Endothelial cell of umbilical vein (primary cell): ENCODE measurements at regions of chr17 and their contacts with region 1.

Region 1: DNA sequence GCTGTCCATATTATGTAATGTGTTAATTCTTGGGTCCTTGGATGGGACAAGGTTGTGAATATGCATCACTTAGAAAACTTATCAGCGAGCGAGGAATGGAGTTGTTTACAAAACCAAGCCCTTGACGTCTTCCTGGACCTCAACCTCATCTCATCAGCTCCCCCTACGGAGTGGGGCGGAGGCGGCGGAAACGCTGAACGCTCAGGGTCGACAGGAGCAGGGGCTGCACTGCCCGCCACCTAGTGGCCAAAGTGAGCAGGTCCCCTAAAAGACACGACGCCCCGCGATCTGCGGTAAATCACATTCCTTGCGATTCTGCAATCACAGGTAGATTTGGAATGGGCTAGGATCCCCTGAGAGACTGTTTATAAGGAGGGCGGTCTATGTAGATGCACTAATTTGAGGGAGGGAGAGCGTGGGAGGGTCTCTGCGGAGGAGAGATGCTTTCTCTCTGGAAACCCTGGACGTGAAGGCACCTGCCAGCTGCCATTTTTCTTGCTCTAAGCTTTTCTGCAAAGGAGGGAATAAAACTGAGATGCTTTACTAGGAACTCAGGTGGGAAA is 5.4 kb upstream of the ICAM2 start:
- DNase-seq: peak; percentile 82
- H3K4me3 ChIP-seq: no peak overlapping the region
- H3K27ac ChIP-seq: peak overlapping the region; percentile 43
- H3K4me1 ChIP-seq: peaks cover 29% of the 10 kb centered on the region
- H3K27me3 ChIP-seq: no peaks in the 10 kb centered on the region
- CTCF ChIP-seq: peak; percentile 98
- POLR2A ChIP-seq: no peak

Region 2: DNA sequence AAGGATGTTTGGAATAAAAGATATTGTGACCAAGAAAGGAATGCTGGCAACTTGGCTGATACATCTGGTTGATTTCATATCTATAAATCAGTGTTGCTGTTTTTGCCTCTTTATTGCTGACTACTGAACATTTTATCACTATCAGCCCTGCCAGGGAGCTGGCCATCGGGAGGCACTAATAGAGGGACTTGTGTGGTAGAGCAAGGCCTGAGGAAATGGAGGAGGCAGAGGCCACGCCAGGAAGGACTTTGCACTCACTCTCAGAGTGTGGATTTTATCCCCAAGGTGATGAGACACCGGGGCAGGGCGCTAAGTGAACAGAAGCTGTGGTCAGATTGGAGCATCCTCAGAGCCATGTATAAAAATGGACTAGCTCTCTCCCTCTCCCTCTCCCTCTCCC is 570.4 kb before region 1 on chr17:
- CTCF ChIA-PET with region 1: no interaction called
- POLR2A ChIA-PET with region 1: no interaction called
- dilution Hi-C with region 1: no loop called
- intact Hi-C with region 1: no loop called
- DNase-seq: peak; percentile 76
- H3K4me3 ChIP-seq: no peak overlapping the region
- H3K27ac ChIP-seq: no peak overlapping the region
- H3K4me1 ChIP-seq: peaks cover 19% of the 10 kb centered on the region
- H3K27me3 ChIP-seq: no peaks in the 10 kb centered on the region
- CTCF ChIP-seq: no peak
- POLR2A ChIP-seq: no peak

Region 3: GRCh38 chr17:63805591-63805990 is 220.2 kb before region 1 on chr17:
- CTCF ChIA-PET with region 1: no interaction called
- POLR2A ChIA-PET with region 1: no interaction called
- dilution Hi-C with region 1: no loop called
- intact Hi-C with region 1: no loop called
- DNase-seq: no peak
- H3K4me3 ChIP-seq: no peak overlapping the region
- H3K27ac ChIP-seq: no peak overlapping the region
- H3K4me1 ChIP-seq: no peaks in the 10 kb centered on the region
- H3K27me3 ChIP-seq: no peaks in the 10 kb centered on the region
- CTCF ChIP-seq: no peak
- POLR2A ChIP-seq: no peak

Region 4: GRCh38 chr17:63946440-63947367 is 79.1 kb before region 1 on chr17:
- CTCF ChIA-PET with region 1: interaction called, 17 read pairs
- POLR2A ChIA-PET with region 1: no interaction called
- dilution Hi-C with region 1: no loop called
- intact Hi-C with region 1: no loop called
- DNase-seq: peak; percentile 23
- H3K4me3 ChIP-seq: no peak overlapping the region
- H3K27ac ChIP-seq: no peak overlapping the region
- H3K4me1 ChIP-seq: no peaks in the 10 kb centered on the region
- H3K27me3 ChIP-seq: no peaks in the 10 kb centered on the region
- CTCF ChIP-seq: peak; percentile 38 to 94
- POLR2A ChIP-seq: no peak

Region 5: DNA sequence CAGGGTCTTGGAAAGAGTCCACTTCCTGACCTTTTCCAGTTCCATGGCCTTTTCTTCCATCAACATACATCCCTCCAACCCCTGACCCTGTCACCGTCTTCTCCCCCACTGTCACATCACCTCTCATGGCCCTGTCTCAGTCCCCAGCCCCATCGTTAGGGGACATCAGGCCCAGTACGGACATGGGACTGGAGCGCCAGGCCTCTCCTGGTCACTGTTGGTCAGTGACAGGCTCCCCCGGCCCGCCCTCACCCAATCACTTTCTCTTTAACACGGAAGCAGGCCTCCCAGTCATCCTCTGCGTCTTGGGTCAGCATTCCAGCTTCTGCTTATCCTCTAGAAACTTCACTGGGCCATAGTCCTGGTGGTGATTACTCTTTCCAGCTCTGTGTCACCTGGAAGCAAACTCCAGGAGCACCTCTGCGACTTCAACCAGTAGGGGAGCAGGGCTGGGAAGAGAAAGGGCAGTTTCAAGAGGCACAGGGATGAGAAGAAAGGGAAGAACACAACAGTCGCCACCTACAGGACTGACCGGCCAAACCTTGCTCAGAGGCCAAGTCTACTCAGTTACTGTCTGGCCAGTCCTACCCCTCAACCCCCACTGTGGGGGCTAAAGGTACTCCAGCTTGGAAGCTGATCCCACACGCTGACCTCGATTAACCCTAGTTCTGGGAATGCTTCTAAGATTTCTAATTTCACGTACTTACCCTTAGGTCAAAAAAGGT is 10.5 kb after region 1 on chr17:
- CTCF ChIA-PET with region 1: interaction called, 24 read pairs
- POLR2A ChIA-PET with region 1: no interaction called
- dilution Hi-C with region 1: no loop called
- intact Hi-C with region 1: no loop called
- DNase-seq: no peak
- H3K4me3 ChIP-seq: no peak overlapping the region
- H3K27ac ChIP-seq: no peak overlapping the region
- H3K4me1 ChIP-seq: no peaks in the 10 kb centered on the region
- H3K27me3 ChIP-seq: no peaks in the 10 kb centered on the region
- CTCF ChIP-seq: no peak
- POLR2A ChIP-seq: no peak

Region 6: GRCh38 chr17:64063766-64064224 is 38.0 kb after region 1 on chr17:
- CTCF ChIA-PET with region 1: interaction called, 44 read pairs
- POLR2A ChIA-PET with region 1: interaction called, 3 read pairs
- dilution Hi-C with region 1: no loop called
- intact Hi-C with region 1: loop called (anchors 1 kb)
- DNase-seq: peak; percentile 73
- H3K4me3 ChIP-seq: no peak overlapping the region
- H3K27ac ChIP-seq: no peak overlapping the region
- H3K4me1 ChIP-seq: peaks cover 22% of the 10 kb centered on the region
- H3K27me3 ChIP-seq: no peaks in the 10 kb centered on the region
- CTCF ChIP-seq: peak; percentile 60 to 71
- POLR2A ChIP-seq: no peak

Region 7: DNA sequence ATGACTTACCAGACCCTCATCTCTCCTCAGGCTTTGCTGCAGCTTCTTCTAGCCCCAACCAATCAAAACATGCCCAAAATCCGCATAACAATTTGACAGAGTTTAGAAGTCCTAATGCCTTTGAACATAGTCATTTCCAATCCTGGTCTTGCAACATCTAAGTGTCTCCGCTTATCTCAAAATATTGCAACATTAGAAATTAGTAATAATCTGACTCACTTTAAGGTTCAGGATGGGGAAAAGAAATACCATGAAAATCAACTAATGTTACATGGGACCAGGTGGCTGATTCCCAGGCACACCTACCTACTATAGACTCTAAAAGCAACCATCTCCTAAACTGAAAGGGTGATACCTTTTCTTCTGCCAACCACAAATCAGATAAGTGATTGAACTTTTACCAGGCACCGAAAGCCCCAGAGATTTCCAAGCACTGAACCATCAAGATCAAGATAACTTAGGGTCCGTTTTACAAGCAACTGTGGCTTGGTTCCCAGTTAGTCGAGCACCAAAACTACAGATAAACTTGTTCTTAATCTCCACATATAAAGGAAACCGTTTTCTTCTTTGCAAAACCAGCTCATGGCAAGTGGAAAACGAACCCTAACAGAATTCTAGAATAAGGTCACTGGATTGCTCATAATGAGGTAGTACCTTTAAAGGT is 90.2 kb after region 1 on chr17:
- CTCF ChIA-PET with region 1: interaction called, 13 read pairs
- POLR2A ChIA-PET with region 1: no interaction called
- dilution Hi-C with region 1: no loop called
- intact Hi-C with region 1: no loop called
- DNase-seq: no peak
- H3K4me3 ChIP-seq: no peak overlapping the region
- H3K27ac ChIP-seq: no peak overlapping the region
- H3K4me1 ChIP-seq: no peaks in the 10 kb centered on the region
- H3K27me3 ChIP-seq: no peaks in the 10 kb centered on the region
- CTCF ChIP-seq: no peak
- POLR2A ChIP-seq: no peak

Region 8: GRCh38 chr17:64281962-64282727 is 256.3 kb after region 1 on chr17:
- CTCF ChIA-PET with region 1: interaction called, 35 read pairs
- POLR2A ChIA-PET with region 1: no interaction called
- dilution Hi-C with region 1: no loop called
- intact Hi-C with region 1: loop called (anchors 1 kb)
- DNase-seq: peak; percentile 87
- H3K4me3 ChIP-seq: no peak overlapping the region
- H3K27ac ChIP-seq: no peak overlapping the region
- H3K4me1 ChIP-seq: peaks cover 17% of the 10 kb centered on the region
- H3K27me3 ChIP-seq: no peaks in the 10 kb centered on the region
- CTCF ChIP-seq: peak; percentile 58 to 61
- POLR2A ChIP-seq: no peak

Region 9: DNA sequence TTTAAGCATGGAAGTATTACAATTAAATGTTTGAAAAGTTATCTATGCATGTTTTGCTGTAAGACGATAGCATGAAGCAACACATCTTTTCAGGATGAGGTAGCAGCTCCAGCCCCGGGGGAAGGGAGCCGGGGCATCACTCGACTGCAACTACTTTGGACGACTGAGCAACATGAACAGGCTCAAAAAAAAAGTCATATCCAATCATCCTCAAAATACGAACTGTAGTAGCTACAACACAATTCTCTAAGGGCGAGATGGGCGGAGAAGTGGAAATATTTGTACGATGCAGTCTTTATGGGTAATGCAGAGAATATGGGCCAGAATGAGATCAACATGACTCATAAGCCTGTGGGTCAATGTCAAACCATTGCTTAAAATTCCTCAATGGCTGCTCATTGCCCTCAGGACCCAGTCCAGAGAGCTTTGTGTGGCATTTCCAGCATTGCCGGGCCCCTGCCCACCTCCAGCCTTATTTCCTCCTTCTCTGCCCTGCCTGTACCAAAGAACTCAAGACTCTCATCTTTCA is 653.9 kb after region 1 on chr17:
- CTCF ChIA-PET with region 1: no interaction called
- POLR2A ChIA-PET with region 1: no interaction called
- dilution Hi-C with region 1: no loop called
- intact Hi-C with region 1: no loop called
- DNase-seq: peak; percentile 40
- H3K4me3 ChIP-seq: no peak overlapping the region
- H3K27ac ChIP-seq: peak overlapping the region; percentile 64
- H3K4me1 ChIP-seq: peaks cover 19% of the 10 kb centered on the region
- H3K27me3 ChIP-seq: no peaks in the 10 kb centered on the region
- CTCF ChIP-seq: no peak
- POLR2A ChIP-seq: no peak